ENCODE measurements at regions of chr19 and their contacts with region 1.

Region 1: DNA sequence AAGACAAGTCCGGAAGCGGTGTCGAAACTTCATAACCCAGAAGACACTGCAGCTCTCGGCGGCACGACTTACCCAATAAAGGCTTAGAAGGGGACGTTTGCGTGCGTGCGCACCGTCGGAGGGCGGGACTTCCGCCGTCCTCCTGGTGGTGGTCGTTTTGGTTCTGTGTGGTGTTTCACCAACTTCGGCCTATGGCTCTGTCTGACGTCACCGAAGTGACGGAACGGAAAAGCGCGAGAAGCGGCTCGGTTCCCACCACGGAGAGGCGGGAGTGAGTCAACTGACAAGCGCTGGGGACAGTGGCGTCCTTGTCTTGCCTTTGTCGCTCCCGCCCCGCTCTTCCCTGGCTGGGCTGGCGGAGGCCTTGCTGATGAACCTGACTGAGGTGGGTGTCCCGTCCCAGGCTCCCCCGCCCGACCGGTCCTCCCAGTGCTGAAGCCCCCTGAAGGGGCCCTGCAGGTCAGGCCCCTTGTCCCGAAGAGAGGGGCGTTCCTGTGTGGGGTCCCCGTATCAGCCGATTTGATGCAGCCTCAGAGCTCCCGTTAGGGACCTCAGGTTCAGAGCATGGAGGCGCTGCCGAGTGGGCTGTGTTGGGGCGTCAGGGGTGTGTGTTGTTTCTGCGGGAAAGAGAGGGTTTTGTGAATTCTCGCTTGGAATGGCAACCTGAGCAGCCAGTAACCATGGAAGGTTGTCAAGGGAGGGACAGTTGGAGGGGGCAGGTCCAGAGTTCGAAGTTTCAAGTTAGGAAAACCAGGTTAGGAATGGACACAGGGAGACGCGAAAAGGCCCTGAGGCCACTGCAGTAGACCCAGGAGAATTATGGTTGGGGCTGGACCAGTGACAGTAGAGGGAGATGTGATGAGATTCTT is at the start of gene ZNF548:
- DNase-seq: peak; percentile 98
- ATAC-seq: peak; percentile 100
- total RNA-seq, gene ZNF548: 16.4 to 20.6 TPM

Region 2: GRCh38 chr19:57363734-57364181 is 26.2 kb before region 1 on chr19:
- intact Hi-C with region 1: loop called in 1 of 2 experiments (anchors 2 kb)
- DNase-seq: no peak
- ATAC-seq: peak; percentile 3 to 7

Measured in left cardiac atrium (tissue), 4 donors.